PC-9 (cell line): ENCODE measurements at regions of chr1 and their contacts with region 1.

Region 1: GRCh38 chr1:15089258-15089992 is 64.1 kb upstream of the TMEM51 start:
- DNase-seq: peak; percentile 77 to 78
- H3K4me3 ChIP-seq: 0 out of 2 replicates have a peak overlapping the region, but pooled peaks have one; percentile 6
- H3K27ac ChIP-seq: peak overlapping the region; percentile 41; the same call in 1 of the 2 replicates
- H3K4me1 ChIP-seq: peaks cover 28% of the 10 kb centered on the region
- H3K27me3 ChIP-seq: no peaks in the 10 kb centered on the region
- CTCF ChIP-seq: no peak

Region 2: GRCh38 chr1:14778898-14779865 is 310.2 kb before region 1 on chr1:
- CTCF ChIA-PET with region 1: interaction called, 18 read pairs
- POLR2A ChIA-PET with region 1: no interaction called
- intact Hi-C with region 1: no loop called
- DNase-seq: peak in 1 of 2 experiments; percentile 25
- H3K4me3 ChIP-seq: no peak overlapping the region
- H3K27ac ChIP-seq: no peak overlapping the region
- H3K4me1 ChIP-seq: no peaks in the 10 kb centered on the region
- H3K27me3 ChIP-seq: no peaks in the 10 kb centered on the region; the same call in 1 of the 2 replicates
- CTCF ChIP-seq: peak; percentile 62

Region 3: DNA sequence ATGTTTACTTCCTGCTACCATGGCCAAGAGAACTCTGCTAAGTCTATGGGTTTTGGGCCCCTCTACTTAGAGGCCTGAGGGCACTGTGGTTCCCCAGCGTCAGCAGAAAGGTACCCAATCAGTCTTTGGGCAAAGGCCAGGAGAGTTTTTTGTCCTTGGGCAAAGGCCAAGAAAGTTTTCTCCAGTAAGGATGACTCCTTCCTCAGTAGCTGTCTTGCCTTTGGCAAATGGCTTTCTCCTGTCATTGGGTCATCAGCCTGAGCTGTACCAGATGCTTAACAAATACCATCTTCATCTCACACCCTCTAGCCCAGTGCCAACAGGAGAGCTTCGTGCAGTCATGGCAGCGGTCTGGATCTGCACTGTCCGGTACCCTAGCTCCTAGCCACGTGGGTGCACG is 135.2 kb before region 1 on chr1:
- CTCF ChIA-PET with region 1: no interaction called
- POLR2A ChIA-PET with region 1: no interaction called
- intact Hi-C with region 1: no loop called
- DNase-seq: peak in 1 of 2 experiments; percentile 37
- H3K4me3 ChIP-seq: no peak overlapping the region
- H3K27ac ChIP-seq: no peak overlapping the region
- H3K4me1 ChIP-seq: no peaks in the 10 kb centered on the region
- H3K27me3 ChIP-seq: no peaks in the 10 kb centered on the region
- CTCF ChIP-seq: no peak

Region 4: GRCh38 chr1:15100121-15100874 is 10.9 kb after region 1 on chr1:
- CTCF ChIA-PET with region 1: no interaction called
- POLR2A ChIA-PET with region 1: interaction called, 19 read pairs
- intact Hi-C with region 1: no loop called
- DNase-seq: peak; percentile 39 to 68
- H3K4me3 ChIP-seq: no peak overlapping the region
- H3K27ac ChIP-seq: no peak overlapping the region
- H3K4me1 ChIP-seq: no peaks in the 10 kb centered on the region
- H3K27me3 ChIP-seq: no peaks in the 10 kb centered on the region
- CTCF ChIP-seq: peak; percentile 88

Region 5: GRCh38 chr1:15345711-15346355 is 256.4 kb after region 1 on chr1:
- CTCF ChIA-PET with region 1: no interaction called
- POLR2A ChIA-PET with region 1: interaction called, 20 read pairs
- intact Hi-C with region 1: no loop called
- DNase-seq: peak; percentile 81 to 88
- H3K4me3 ChIP-seq: peak overlapping the region; percentile 24; the same call in 1 of the 2 replicates
- H3K27ac ChIP-seq: peak overlapping the region; percentile 99
- H3K4me1 ChIP-seq: peaks cover 69% of the 10 kb centered on the region
- H3K27me3 ChIP-seq: no peaks in the 10 kb centered on the region
- CTCF ChIP-seq: no peak